ENCODE measurements at regions of chr19 and their contacts with region 1.

Region 1: DNA sequence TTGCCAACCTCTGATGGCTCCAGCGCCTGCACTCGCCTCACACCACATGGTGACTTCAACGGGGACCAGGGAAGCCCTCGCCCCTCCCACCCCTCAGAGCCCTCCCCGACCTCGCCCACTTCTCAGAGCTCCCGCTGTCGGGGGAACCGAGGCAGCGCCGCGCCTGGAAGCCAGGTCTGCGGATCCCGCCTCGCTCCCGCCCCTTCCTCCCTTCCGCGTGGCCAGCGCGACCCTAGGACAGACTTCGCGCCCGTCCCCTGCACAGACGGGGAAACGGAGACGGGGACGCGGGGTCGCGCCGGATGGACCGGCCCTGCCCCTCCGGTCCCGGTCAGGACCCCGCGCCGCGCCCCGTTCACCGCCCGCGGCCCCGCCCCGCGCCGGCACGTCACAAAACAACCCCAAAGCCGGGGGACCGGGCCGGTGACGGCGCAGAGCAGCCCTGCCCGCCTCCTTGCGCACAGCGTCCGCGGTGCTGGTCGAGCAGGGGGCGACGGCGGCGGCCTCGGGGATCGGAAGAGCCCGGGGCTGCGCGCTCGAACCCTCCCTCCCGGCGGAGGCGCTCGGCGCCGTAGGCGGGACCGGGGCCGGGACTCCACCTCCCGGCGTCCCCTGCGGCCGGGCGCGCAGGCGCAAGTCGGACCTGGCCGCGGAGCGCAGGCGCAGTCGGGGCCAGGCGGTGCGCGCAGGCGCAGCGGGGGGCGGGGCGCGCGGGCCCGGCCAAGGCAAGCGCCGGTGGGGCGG is 379 bp upstream of the CDC34 start:
- DNase-seq: peak; percentile 90
- H3K4me3 ChIP-seq: peak overlapping the region; percentile 68 to 94 (median 79)
- H3K27ac ChIP-seq: peak overlapping the region; percentile 99
- H3K4me1 ChIP-seq: peaks cover 14 to 32% (median 28%) of the 10 kb centered on the region in 4 donors
- H3K27me3 ChIP-seq: peaks cover 16% of the 10 kb centered on the region
- CTCF ChIP-seq: no peak
- EP300 ChIP-seq: no peak
- POLR2A ChIP-seq: peak; percentile 38

Region 2: GRCh38 chr19:383922-384798 is 147.0 kb before region 1 on chr19:
- in situ Hi-C with region 1: no loop called
- intact Hi-C with region 1: no loop called
- DNase-seq: no peak
- H3K4me3 ChIP-seq: no peak overlapping the region
- H3K27ac ChIP-seq: no peak overlapping the region
- H3K4me1 ChIP-seq: no peaks in the 10 kb centered on the region
- H3K27me3 ChIP-seq: peaks cover 40% of the 10 kb centered on the region
- CTCF ChIP-seq: peak; percentile 47 to 55 (median 49)
- EP300 ChIP-seq: no peak
- POLR2A ChIP-seq: no peak

Region 3: DNA sequence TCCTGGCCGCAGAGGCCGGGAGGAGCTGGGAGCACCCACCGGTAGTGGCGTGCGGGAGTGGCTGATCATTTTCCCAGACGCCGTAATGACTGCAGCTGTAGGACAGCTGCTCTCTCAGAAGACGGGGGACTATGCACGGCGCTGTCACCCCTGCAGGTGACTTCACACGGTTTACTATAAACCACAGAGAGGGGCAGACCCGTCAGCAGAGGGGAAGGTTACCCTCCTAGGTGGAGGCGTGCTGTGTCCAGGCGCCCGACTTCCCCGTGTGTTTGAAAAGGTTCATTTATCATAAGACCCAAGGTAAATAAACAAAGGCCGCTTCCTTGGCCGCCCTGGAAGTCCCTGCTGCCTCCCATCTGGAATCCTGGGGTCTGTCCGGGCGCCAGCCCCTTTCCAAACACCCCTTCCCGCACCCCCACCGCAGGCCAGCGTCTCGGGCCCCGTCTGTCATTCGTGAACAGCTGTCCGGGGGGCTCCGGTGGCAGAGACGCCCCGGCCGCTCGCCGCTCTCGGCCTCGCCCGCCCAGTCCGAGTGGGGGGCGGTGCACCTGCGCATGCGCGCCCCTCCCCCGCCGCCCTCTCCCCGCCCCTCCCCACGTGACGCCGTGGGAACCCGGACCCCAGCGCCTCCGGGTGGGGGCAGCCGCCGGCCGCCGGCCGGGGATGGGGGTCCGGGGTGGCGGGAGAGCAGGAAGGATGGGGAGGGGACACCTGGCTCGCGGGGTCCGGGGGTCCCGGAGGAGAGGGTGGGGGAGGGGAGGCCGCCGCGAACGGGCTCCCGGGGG is 71.3 kb before region 1 on chr19:
- in situ Hi-C with region 1: no loop called
- intact Hi-C with region 1: loop called (anchors 2 kb)
- DNase-seq: peak; percentile 60
- H3K4me3 ChIP-seq: peak overlapping the region; percentile 42 to 85 (median 55)
- H3K27ac ChIP-seq: peak overlapping the region; percentile 72 to 89 (median 76)
- H3K4me1 ChIP-seq: peaks cover 5 to 23% (median 18%) of the 10 kb centered on the region in 4 donors
- H3K27me3 ChIP-seq: peaks cover 25% of the 10 kb centered on the region
- CTCF ChIP-seq: no peak
- EP300 ChIP-seq: no peak
- POLR2A ChIP-seq: no peak

Region 4: DNA sequence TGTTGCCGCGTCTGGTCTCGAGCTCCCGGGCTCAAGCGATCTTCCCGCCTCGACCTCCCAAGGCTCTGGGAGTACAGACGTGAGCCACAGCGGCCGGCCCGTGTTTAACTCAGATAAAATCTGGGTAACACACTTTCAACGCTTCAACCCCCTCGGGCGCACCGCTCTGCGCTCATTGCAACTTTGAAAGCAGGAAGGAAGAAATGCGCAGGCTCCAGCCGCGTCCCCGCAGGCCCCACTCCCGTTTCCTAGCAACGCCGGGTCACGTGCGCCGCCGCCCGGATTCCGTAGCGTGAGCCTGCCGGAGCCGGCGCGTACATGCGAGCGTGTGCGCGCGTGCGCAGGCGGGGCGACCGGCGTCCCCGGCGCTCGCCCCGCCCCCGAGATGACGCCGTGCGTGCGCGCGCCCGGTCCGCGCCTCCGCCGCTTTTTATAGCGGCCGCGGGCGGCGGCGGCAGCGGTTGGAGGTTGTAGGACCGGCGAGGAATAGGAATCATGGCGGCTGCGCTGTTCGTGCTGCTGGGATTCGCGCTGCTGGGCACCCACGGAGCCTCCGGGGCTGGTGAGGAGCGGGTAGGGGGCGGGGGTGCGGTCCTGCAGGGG is 41.1 kb after region 1 on chr19 and contains the start of gene BSG:
- in situ Hi-C with region 1: no loop called
- intact Hi-C with region 1: loop called (anchors 5 kb)
- DNase-seq: peak; percentile 99
- H3K4me3 ChIP-seq: peak within 1 kb of the TSS; percentile 87 to 100 (median 98)
- H3K27ac ChIP-seq: peak within 1 kb of the TSS; percentile 92 to 99 (median 96)
- H3K4me1 ChIP-seq: peaks cover 21 to 52% (median 46%) of the 10 kb centered on the region in 4 donors
- H3K27me3 ChIP-seq: no peaks in the 10 kb centered on the region
- CTCF ChIP-seq: no peak
- EP300 ChIP-seq: no peak
- POLR2A ChIP-seq: peak; percentile 96
- total RNA-seq, gene BSG: 909 to 2,228 (median 1,224) TPM

Region 5: GRCh38 chr19:588093-588740 is 57.0 kb after region 1 on chr19:
- in situ Hi-C with region 1: no loop called
- intact Hi-C with region 1: no loop called
- DNase-seq: peak; percentile 76
- H3K4me3 ChIP-seq: no peak overlapping the region
- H3K27ac ChIP-seq: no peak overlapping the region
- H3K4me1 ChIP-seq: peaks cover 7 to 27% (median 19%) of the 10 kb centered on the region in 4 donors
- H3K27me3 ChIP-seq: peaks cover 73% of the 10 kb centered on the region
- CTCF ChIP-seq: peak; percentile 35 to 64 (median 46)
- EP300 ChIP-seq: no peak
- POLR2A ChIP-seq: no peak

Region 6: DNA sequence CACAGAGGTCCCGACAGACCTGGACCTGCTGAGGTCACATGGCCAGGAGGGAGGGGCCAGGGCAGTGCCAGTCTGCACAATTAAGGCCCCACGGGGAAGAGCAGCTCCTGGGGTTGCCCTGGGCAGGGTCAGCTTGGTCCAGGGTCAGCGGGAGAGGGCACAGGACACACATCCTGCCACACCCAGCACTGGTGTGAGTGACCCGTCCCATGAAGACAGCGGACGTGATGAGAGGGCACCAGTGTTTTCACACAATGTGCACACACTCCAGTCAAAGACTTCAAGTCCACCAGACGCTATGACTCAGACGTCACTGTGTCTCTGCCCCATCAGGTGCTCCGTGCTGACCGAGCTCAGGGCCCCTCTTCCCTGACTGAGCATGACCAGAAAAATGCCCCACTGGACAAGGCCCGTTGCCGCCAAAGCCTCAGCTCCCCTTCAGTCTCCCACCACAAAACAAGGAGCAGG is 485.5 kb after region 1 on chr19:
- in situ Hi-C with region 1: no loop called
- intact Hi-C with region 1: no loop called
- DNase-seq: peak; percentile 60
- H3K4me3 ChIP-seq: no peak overlapping the region
- H3K27ac ChIP-seq: peak overlapping the region; percentile 37 to 70 (median 60)
- H3K4me1 ChIP-seq: peaks cover 40 to 52% (median 46%) of the 10 kb centered on the region in 4 donors
- H3K27me3 ChIP-seq: no peaks in the 10 kb centered on the region
- CTCF ChIP-seq: no peak
- EP300 ChIP-seq: peak; percentile 8
- POLR2A ChIP-seq: no peak

Measured in transverse colon (tissue), 4 donors.